Mucosa of descending colon (tissue), 3 donors: ENCODE measurements at regions of chr7 and their contacts with region 1.

Region 1: DNA sequence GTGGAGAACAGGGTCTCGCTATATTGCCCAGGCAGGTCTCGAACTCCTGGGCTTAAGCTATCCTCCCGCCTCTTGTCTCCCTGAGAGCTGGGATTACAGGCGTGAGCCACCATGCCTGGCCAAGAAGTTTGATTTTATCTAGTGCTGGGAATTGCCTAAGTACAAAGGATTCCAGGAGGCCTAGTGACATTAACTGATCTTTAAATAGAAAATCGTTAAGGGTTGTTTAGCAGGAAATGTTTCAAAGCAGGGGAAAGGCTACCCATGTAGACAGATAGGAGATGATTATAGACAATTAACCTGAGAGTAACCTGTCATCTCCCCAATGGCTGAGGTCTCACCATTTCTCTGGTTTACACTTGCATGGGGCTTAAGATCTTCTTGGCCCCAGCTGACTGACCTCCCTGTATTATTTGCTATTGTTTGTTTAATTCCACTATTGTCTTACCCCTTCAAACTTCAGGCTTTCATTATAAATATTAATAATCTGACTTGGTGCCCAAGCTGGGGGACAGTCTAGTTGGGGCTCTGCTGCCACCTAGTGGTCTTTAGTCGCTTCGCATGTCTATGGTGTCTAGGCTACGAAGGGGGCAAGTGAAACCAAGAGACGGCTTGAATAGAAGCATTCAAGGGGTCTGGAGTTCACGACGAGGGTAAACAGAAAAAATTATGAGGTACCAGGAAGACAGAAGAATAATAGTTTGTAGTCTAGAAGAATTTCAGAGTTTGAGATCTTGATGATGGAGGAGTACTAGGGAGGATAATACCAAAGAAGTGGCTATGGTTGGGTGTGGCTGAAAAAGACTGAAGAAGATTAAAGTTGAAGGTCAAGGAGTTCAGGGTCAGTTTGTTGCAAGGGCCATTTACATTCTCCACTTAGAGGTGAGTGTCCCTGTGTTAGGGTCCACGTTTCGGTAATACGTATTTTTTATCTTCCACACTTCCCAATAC is 40.4 kb upstream of the BPGM start:
- DNase-seq: peak in 2 of 3 donors; percentile 48 to 75
- ATAC-seq: peak; percentile 85
- H3K4me3 ChIP-seq: no peak overlapping the region
- H3K4me1 ChIP-seq: no peaks in the 10 kb centered on the region
- CTCF ChIP-seq: peak; percentile 86

Region 2: GRCh38 chr7:134514663-134515062 is 91.6 kb before region 1 on chr7:
- intact Hi-C with region 1: loop called (anchors 1 to 10 kb)
- DNase-seq: peak in 1 of 3 donors; percentile 72
- ATAC-seq: peak; percentile 86
- H3K4me3 ChIP-seq: no peak overlapping the region
- H3K4me1 ChIP-seq: no peaks in the 10 kb centered on the region
- CTCF ChIP-seq: peak; percentile 52